Activated CD8-positive, alpha-beta T cell treated with anti-CD3 and anti-CD28 coated beads for 36 hours (primary cell): ENCODE measurements at regions of chr19 and their contacts with region 1.

Region 1: GRCh38 chr19:46487802-46488445 is 7.7 kb downstream of the PNMA8B start:
- DNase-seq: peak; percentile 83
- ATAC-seq: peak; percentile 80
- H3K4me3 Mint-ChIP-seq: no peak overlapping the region
- H3K27ac Mint-ChIP-seq: no peak overlapping the region
- H3K4me1 Mint-ChIP-seq: peaks cover 10% of the 10 kb centered on the region
- H3K27me3 Mint-ChIP-seq: peaks cover 67% of the 10 kb centered on the region
- CTCF ChIP-seq: peak; percentile 87

Region 2: DNA sequence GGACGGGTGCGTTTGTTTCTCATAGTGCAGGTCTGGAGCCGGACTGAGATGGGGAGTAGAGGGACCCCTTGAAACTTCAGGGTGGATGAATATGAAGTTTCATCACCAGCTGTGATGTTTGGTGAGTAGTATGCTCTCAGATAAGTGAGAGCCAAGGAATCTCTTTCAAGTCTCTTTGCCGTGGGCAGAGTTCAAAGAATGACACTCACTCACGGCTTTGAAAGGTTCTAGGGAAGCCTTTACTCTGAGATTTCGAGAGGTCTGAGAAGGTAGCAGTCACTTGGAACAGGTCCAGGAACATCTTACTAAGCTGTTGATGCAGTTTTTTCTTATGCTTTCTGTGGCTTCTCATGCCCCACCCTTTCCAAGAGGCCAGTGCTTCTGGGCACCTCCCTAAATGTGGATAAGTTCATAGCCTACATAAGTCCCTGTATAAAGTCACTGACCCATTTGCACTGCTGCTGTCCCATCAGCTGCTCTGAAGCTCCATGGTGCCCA is 340.1 kb before region 1 on chr19 and contains the start of gene IGFL2:
- CTCF ChIA-PET with region 1: no interaction called
- POLR2A ChIA-PET with region 1: no interaction called
- intact Hi-C with region 1: no loop called
- DNase-seq: peak; percentile 46
- ATAC-seq: peak; percentile 91
- H3K4me3 Mint-ChIP-seq: no peak within 1 kb of the TSS
- H3K27ac Mint-ChIP-seq: no peak within 1 kb of the TSS
- H3K4me1 Mint-ChIP-seq: peaks cover 8% of the 10 kb centered on the region
- H3K27me3 Mint-ChIP-seq: peaks cover 50% of the 10 kb centered on the region
- CTCF ChIP-seq: no peak
- total RNA-seq, gene IGFL2: not detected

Region 3: DNA sequence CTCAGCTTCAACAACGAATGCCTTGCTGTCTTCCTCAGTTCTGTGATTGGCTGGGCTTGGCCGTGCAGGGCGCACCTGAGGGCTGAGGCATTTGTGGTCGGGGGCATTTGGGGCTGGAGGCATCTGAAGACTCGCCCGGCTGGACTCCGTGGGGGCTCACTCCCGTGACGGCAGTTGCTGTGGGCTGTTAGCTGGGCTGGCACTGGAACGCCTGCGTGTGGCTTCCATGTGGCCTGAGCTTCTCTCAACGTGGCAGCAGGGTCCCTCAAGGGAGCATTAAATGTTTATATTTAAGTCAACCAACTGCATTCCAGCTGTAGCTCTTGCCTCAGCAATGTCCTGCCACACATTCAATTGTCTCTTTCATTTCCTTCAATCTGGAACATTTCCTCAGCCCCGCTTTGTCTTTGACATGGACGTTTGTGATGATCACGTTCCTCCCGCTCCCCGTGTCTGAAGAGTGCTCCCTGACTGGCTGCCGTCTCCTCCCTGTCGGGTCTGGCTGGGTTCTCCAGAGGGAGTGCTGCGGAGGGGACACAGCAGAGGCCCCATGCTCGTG is 95.6 kb before region 1 on chr19:
- CTCF ChIA-PET with region 1: interaction called, 38 read pairs
- POLR2A ChIA-PET with region 1: interaction called, 3 read pairs
- intact Hi-C with region 1: no loop called
- DNase-seq: no peak
- ATAC-seq: no peak
- H3K4me3 Mint-ChIP-seq: no peak overlapping the region
- H3K27ac Mint-ChIP-seq: peak overlapping the region; percentile 43
- H3K4me1 Mint-ChIP-seq: peaks cover 8% of the 10 kb centered on the region
- H3K27me3 Mint-ChIP-seq: no peaks in the 10 kb centered on the region
- CTCF ChIP-seq: no peak

Region 4: GRCh38 chr19:46404055-46404752 is 83.7 kb before region 1 on chr19:
- CTCF ChIA-PET with region 1: interaction called, 20 read pairs
- POLR2A ChIA-PET with region 1: interaction called, 4 read pairs
- intact Hi-C with region 1: loop called (anchors 2 kb)
- DNase-seq: no peak
- ATAC-seq: no peak
- H3K4me3 Mint-ChIP-seq: peak overlapping the region; percentile 47
- H3K27ac Mint-ChIP-seq: no peak overlapping the region
- H3K4me1 Mint-ChIP-seq: peaks cover 13% of the 10 kb centered on the region
- H3K27me3 Mint-ChIP-seq: peaks cover 56% of the 10 kb centered on the region
- CTCF ChIP-seq: no peak

Region 5: DNA sequence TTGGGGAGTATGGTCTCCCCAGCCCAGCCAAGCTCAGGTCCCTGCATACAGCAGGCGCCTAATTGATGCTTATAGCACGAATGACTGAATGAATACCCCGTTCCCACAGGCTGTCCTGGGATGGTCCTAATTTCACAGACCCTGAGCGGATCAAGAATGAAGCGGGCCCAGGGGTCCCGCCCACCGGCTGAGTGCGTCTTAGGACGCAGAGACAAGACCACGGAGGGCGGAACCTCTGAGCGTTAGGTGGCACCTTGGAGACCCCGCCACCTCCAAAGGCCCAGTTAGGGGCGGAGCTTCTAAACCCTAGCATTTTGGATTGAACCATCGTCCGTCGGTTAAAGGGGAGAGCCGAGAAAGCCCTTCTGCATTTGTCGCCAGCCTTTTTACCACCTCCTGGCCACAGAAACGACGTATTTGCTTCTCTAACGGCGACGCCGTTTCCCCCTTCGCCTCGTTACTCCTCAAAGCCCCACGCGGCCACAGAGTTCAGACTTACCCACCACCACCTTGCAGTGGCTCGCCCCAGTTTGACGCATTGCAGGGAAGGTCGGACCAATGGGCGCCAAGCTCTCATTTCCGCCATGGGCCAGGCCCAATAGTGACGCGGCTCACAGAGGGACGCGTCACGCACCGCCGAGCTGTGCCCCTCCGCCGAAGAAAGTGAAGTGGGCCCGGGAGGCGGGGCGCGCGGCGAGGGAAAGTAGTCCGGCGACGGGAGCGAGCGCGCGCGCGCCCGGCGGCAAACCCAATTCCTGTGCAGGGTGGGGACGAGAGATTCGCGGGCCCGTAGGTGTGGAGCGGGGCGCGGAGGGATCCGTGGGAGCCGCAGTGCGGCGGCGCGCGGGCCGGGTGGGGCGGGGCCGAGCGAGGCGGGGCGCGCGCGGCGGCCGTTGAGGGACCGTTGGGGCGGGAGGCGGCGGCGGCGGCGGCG is 112.7 kb after region 1 on chr19:
- CTCF ChIA-PET with region 1: no interaction called
- POLR2A ChIA-PET with region 1: no interaction called
- intact Hi-C with region 1: no loop called
- DNase-seq: peak; percentile 99
- ATAC-seq: peak; percentile 90
- H3K4me3 Mint-ChIP-seq: peak overlapping the region; percentile 99
- H3K27ac Mint-ChIP-seq: peak overlapping the region; percentile 100
- H3K4me1 Mint-ChIP-seq: peaks cover 27% of the 10 kb centered on the region
- H3K27me3 Mint-ChIP-seq: no peaks in the 10 kb centered on the region
- CTCF ChIP-seq: no peak